Activated B cell treated with CpG ODN at 0.5 μM for 24 hours (primary cell): ENCODE measurements at regions of chr2 and their contacts with region 1.

Region 1: GRCh38 chr2:55232084-55232862 is at the starts of genes CLHC1 and RPS27A:
- DNase-seq: peak; percentile 92
- ATAC-seq: peak; percentile 86
- H3K4me3 Mint-ChIP-seq: peak within 1 kb of the TSS; percentile 99
- H3K27ac Mint-ChIP-seq: peak within 1 kb of the TSS; percentile 98
- H3K4me1 Mint-ChIP-seq: peaks cover 58% of the 10 kb centered on the region
- H3K27me3 Mint-ChIP-seq: no peaks in the 10 kb centered on the region
- CTCF ChIP-seq: no peak
- total RNA-seq, gene CLHC1: 7.1 and 10.5 TPM in 2 replicates
- total RNA-seq, gene RPS27A: 1,833 and 2,316 TPM in 2 replicates

Region 2: DNA sequence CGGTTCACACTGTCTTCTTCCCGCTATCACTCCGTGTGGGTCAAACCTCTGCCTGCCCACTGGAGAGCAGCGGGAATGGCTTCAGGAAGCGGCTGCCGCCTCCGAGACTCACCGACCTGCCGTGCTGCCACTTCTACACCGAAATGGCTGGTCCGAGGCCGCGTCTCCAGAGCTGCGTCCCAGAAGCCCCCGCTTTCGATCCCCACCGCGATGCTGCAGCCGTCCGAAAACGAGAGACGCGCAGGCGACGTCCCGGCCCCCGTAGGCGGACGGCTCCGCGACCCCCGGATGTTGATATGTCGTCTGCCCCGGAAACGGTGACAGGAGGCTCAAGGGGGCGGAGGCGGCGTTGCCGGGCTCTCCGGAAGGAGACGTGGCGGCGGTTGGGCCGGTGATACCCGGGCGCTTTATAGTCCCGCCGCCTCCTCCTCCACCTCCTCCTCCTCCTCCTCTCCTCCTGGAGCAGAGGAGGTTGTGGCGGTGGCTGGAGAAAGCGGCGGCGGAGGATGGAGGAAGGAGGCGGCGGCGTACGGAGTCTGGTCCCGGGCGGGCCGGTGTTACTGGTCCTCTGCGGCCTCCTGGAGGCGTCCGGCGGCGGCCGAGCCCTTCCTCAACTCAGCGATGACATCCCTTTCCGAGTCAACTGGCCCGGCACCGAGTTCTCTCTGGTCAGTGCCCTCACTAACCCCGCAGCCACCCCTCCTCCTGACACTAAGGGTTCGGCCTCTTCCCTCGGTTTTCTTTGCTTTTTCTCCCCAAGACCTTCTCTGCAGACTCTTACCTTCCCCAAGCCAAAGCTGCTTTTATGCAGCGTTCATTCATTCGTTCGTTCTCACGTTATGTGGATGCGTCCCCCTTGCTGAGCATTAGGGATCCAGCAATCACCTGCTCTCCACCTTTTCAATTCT is 1445.3 kb before region 1 on chr2 and contains the starts of genes ASB3 and ERLEC1:
- CTCF ChIA-PET with region 1: no interaction called
- POLR2A ChIA-PET with region 1: no interaction called
- intact Hi-C with region 1: loop called (anchors 5 kb)
- DNase-seq: peak; percentile 82
- ATAC-seq: peak; percentile 93
- H3K4me3 Mint-ChIP-seq: peak within 1 kb of the TSS; percentile 91
- H3K27ac Mint-ChIP-seq: peak within 1 kb of the TSS; percentile 94
- H3K4me1 Mint-ChIP-seq: peaks cover 50% of the 10 kb centered on the region
- H3K27me3 Mint-ChIP-seq: no peaks in the 10 kb centered on the region
- CTCF ChIP-seq: no peak
- total RNA-seq, gene ASB3: 16.3 and 22.8 TPM in 2 replicates
- total RNA-seq, gene ERLEC1: 16.8 and 18.2 TPM in 2 replicates

Region 3: GRCh38 chr2:54330162-54330925 is 901.9 kb before region 1 on chr2:
- CTCF ChIA-PET with region 1: no interaction called
- POLR2A ChIA-PET with region 1: no interaction called
- intact Hi-C with region 1: loop called (anchors 5 kb)
- DNase-seq: peak; percentile 77
- ATAC-seq: peak; percentile 96
- H3K4me3 Mint-ChIP-seq: peak overlapping the region; percentile 89
- H3K27ac Mint-ChIP-seq: peak overlapping the region; percentile 70
- H3K4me1 Mint-ChIP-seq: peaks cover 21% of the 10 kb centered on the region
- H3K27me3 Mint-ChIP-seq: peaks cover 13% of the 10 kb centered on the region
- CTCF ChIP-seq: no peak

Region 4: GRCh38 chr2:55010149-55010591 is 222.1 kb before region 1 on chr2:
- CTCF ChIA-PET with region 1: no interaction called
- POLR2A ChIA-PET with region 1: no interaction called
- intact Hi-C with region 1: loop called (anchors 5 kb)
- DNase-seq: no peak
- ATAC-seq: peak; percentile 96
- H3K4me3 Mint-ChIP-seq: peak overlapping the region; percentile 84
- H3K27ac Mint-ChIP-seq: peak overlapping the region; percentile 67
- H3K4me1 Mint-ChIP-seq: peaks cover 63% of the 10 kb centered on the region
- H3K27me3 Mint-ChIP-seq: no peaks in the 10 kb centered on the region
- CTCF ChIP-seq: no peak

Region 5: GRCh38 chr2:55282110-55282917 is 50.0 kb after region 1 on chr2:
- CTCF ChIA-PET with region 1: no interaction called
- POLR2A ChIA-PET with region 1: interaction called, 9 read pairs
- intact Hi-C with region 1: loop called (anchors 1 kb)
- DNase-seq: peak; percentile 83
- ATAC-seq: peak; percentile 99
- H3K4me3 Mint-ChIP-seq: peak overlapping the region; percentile 88
- H3K27ac Mint-ChIP-seq: peak overlapping the region; percentile 93
- H3K4me1 Mint-ChIP-seq: peaks cover 28% of the 10 kb centered on the region
- H3K27me3 Mint-ChIP-seq: no peaks in the 10 kb centered on the region
- CTCF ChIP-seq: no peak

Region 6: GRCh38 chr2:55419679-55420438 is 187.6 kb after region 1 on chr2 and contains the start of gene CCDC88A:
- CTCF ChIA-PET with region 1: no interaction called
- POLR2A ChIA-PET with region 1: interaction called, 5 read pairs
- intact Hi-C with region 1: loop called (anchors 2 kb)
- DNase-seq: peak; percentile 86
- ATAC-seq: peak; percentile 87
- H3K4me3 Mint-ChIP-seq: peak within 1 kb of the TSS; percentile 95
- H3K27ac Mint-ChIP-seq: peak within 1 kb of the TSS; percentile 92
- H3K4me1 Mint-ChIP-seq: peaks cover 46% of the 10 kb centered on the region
- H3K27me3 Mint-ChIP-seq: no peaks in the 10 kb centered on the region
- CTCF ChIP-seq: no peak
- total RNA-seq, gene CCDC88A: 25.6 and 35.6 TPM in 2 replicates